ENCODE measurements at regions of chr16 and their contacts with region 1.

Region 1: GRCh38 chr16:50665128-50665878 is 15.8 kb downstream of the SNX20 start:
- DNase-seq: peak; percentile 91
- ATAC-seq: peak; percentile 56
- H3K4me3 Mint-ChIP-seq: peak overlapping the region; percentile 64
- H3K27ac Mint-ChIP-seq: peak overlapping the region; percentile 87
- H3K4me1 Mint-ChIP-seq: peaks cover 49% of the 10 kb centered on the region
- H3K27me3 Mint-ChIP-seq: no peaks in the 10 kb centered on the region

Region 2: DNA sequence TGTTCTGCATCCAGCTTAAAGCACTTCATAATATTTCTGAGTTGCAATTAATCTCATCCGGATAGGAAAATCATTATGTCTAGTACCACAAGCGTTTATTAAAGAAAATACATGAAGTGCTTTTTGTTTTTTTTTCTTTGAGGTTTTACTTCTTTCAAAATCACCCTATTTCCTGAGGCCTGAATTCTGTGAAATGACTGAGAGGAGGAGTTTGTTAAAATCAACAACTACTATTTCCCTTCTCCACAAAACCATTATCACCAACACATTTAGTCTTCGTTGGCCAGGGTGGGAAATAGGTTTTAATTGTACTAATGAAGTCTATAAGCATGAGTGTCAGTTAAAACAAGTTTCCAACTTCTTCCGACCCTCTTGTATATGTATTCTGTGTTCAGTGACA is 449.6 kb before region 1 on chr16:
- CTCF ChIA-PET with region 1: interaction called, 59 read pairs
- POLR2A ChIA-PET with region 1: no interaction called
- DNase-seq: no peak
- ATAC-seq: peak; percentile 43
- H3K4me3 Mint-ChIP-seq: peak overlapping the region; percentile 61
- H3K27ac Mint-ChIP-seq: peak overlapping the region; percentile 80
- H3K4me1 Mint-ChIP-seq: peaks cover 39% of the 10 kb centered on the region
- H3K27me3 Mint-ChIP-seq: no peaks in the 10 kb centered on the region

Region 3: GRCh38 chr16:50368410-50369132 is 296.7 kb before region 1 on chr16 and contains the start of gene BRD7:
- CTCF ChIA-PET with region 1: interaction called, 44 read pairs
- POLR2A ChIA-PET with region 1: interaction called, 7 read pairs
- DNase-seq: peak; percentile 69
- ATAC-seq: peak; percentile 84
- H3K4me3 Mint-ChIP-seq: peak within 1 kb of the TSS; percentile 82
- H3K27ac Mint-ChIP-seq: peak within 1 kb of the TSS; percentile 93
- H3K4me1 Mint-ChIP-seq: peaks cover 41% of the 10 kb centered on the region
- H3K27me3 Mint-ChIP-seq: peaks cover 2% of the 10 kb centered on the region
- total RNA-seq, gene BRD7: 88.9 to 90.4 TPM

Region 4: DNA sequence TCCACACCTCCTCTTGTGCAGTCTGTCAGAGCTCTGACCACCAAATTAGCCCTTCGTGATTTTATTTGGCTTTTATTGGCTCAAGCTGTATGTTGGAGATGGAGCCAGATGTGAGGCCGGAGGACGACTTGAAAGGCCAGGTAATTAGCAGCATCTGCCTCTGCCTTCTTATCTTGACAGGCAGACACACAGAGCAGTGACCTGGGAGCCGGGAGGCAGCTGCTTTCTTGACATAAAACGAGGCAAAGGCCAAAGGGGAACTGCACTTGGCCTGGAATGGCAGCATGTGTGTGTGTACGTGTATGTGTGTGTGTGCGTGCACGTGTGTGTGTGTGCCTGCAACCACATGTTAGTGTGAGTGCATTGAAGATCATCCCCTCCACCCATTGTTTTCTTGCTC is 239.7 kb before region 1 on chr16:
- CTCF ChIA-PET with region 1: no interaction called
- POLR2A ChIA-PET with region 1: no interaction called
- DNase-seq: no peak
- ATAC-seq: no peak
- H3K4me3 Mint-ChIP-seq: no peak overlapping the region
- H3K27ac Mint-ChIP-seq: no peak overlapping the region
- H3K4me1 Mint-ChIP-seq: no peaks in the 10 kb centered on the region
- H3K27me3 Mint-ChIP-seq: peaks cover 2% of the 10 kb centered on the region

Region 5: DNA sequence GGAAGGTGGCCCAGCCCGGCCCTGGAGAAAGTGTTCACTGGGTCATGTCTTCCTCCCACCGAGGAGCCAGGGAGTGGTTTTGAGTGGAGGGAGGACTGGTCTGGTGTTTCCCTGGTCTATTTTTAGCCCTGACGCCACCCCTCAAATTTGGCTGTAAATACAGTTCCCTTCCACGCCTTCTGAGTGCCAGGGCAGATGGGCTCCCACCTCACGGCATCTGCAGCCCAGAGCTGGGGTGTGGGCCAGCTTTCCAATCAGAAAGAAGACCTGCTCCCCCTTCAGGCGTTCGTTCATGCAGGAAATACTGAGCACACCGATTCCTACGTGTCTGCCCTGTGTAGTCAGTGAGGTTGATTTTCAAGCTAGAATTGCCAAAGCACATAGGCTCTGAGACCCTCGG is 37.9 kb before region 1 on chr16:
- CTCF ChIA-PET with region 1: interaction called, 33 read pairs
- POLR2A ChIA-PET with region 1: no interaction called
- DNase-seq: peak; percentile 51
- ATAC-seq: peak; percentile 72
- H3K4me3 Mint-ChIP-seq: peak overlapping the region; percentile 13
- H3K27ac Mint-ChIP-seq: peak overlapping the region; percentile 70
- H3K4me1 Mint-ChIP-seq: peaks cover 19% of the 10 kb centered on the region
- H3K27me3 Mint-ChIP-seq: no peaks in the 10 kb centered on the region

Region 6: DNA sequence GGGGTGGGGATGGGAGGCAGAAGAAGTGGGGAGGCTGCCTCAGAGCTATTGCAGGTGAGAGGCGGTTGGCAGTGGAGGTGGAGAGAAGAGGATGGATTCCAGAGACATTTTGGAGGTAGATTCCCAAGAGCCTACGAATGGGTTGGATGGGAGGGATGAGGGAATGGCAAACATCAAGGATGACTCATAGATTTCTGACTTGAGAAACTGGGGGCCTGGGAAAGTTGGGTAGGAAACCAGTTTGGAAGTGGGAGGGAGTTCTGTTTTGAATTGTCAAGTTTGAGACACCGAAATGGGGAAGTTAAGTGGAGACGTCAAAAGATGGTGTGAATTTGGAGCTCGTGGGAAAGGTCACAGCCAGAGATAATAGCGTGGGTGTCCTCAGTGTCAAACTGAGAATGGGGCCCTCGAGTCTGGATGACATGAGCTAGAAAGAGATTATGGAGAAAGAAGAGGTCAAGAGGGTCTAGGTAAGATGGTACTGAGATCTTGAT is 70.4 kb after region 1 on chr16:
- CTCF ChIA-PET with region 1: interaction called, 567 read pairs
- POLR2A ChIA-PET with region 1: interaction called, 3 read pairs
- DNase-seq: no peak
- ATAC-seq: no peak
- H3K4me3 Mint-ChIP-seq: no peak overlapping the region
- H3K27ac Mint-ChIP-seq: no peak overlapping the region
- H3K4me1 Mint-ChIP-seq: peaks cover 23% of the 10 kb centered on the region
- H3K27me3 Mint-ChIP-seq: no peaks in the 10 kb centered on the region

Region 7: DNA sequence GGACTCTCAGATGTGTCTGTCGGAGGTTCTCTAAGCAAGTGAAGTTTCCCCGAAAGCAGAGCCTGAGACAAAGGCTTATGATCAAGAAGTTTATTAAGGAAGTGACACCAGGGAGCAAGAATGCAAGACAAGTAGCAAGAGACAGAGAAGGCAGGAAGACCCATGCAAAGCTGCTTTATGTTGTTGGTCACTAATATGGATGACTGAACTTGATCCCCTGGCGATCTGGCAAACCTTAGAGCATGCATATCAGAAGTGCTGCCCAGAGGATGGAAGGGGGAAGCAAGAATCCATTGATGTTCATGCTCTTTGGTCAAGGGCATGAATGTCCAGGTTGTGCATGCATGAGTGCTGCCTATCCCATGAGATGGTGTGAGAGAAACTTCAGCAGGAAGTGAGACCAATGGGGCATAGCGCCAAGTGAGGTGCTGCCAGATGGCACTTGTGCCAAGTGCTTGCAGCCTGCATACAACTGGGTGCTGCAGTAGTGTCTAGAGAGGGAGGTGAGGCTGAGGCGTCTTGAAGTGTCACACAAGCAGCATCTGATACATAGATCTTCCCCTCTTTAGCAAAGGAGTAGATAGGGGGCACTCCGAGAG is 309.2 kb after region 1 on chr16:
- CTCF ChIA-PET with region 1: no interaction called
- POLR2A ChIA-PET with region 1: no interaction called
- DNase-seq: no peak
- ATAC-seq: no peak
- H3K4me3 Mint-ChIP-seq: no peak overlapping the region
- H3K27ac Mint-ChIP-seq: no peak overlapping the region
- H3K4me1 Mint-ChIP-seq: no peaks in the 10 kb centered on the region
- H3K27me3 Mint-ChIP-seq: peaks cover 4% of the 10 kb centered on the region